Naive thymus-derived CD4-positive, alpha-beta T cell (primary cell): ENCODE measurements at regions of chr6 and their contacts with region 1.

Region 1: DNA sequence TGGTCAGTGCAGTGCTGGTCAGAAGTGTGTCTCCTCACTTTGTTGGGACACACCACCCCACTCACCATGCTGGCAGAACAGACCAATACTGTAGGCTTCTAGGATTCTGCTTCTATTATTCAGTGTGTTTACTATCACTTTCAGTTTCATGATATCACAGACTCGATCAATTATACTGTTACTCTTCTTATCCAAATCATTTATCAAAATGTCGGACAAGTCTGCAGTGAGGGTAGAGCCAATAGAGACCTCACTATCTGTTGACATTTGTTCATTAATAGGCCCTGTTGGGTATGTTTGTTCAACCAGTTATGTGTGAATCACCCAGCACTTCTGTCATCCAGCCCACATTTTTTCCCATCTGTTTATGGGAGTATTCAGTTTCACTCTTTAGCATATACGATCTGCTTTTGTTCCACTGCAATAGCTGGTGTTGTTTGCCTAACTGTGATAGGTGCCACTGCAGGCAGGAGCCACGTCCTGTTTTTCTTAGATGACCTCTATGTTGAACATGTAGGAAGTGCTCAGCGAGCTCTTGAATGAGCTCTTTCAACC is 140.1 kb downstream of the NRN1 start:
- DNase-seq: peak in 6 of 9 donors; percentile 16 to 42 (median 32)
- ATAC-seq: peak; percentile 76
- H3K4me3 ChIP-seq: peak overlapping the region; percentile 36
- H3K4me3 Mint-ChIP-seq: peak overlapping the region; percentile 69 to 86 (median 80)
- H3K27ac ChIP-seq: peak overlapping the region; percentile 70
- H3K27ac Mint-ChIP-seq: peak overlapping the region; percentile 91 to 100 (median 98)
- H3K4me1 ChIP-seq: peaks cover 31 to 44% of the 10 kb centered on the region in 2 donors
- H3K4me1 Mint-ChIP-seq: peaks cover 30 to 66% (median 59%) of the 10 kb centered on the region in 7 donors
- H3K27me3 ChIP-seq: no peaks in the 10 kb centered on the region
- H3K27me3 Mint-ChIP-seq: no peaks in the 10 kb centered on the region

Region 2: GRCh38 chr6:3990692-3991501 is 1875.7 kb before region 1 on chr6:
- CTCF ChIA-PET with region 1: no interaction called
- POLR2A ChIA-PET with region 1: no interaction called
- intact Hi-C with region 1: no loop called
- DNase-seq: peak; percentile 45 to 72 (median 58)
- ATAC-seq: peak; percentile 96
- H3K4me3 ChIP-seq: no peak overlapping the region
- H3K4me3 Mint-ChIP-seq: peak overlapping the region in 2 of 10 donors; percentile 19 to 29
- H3K27ac ChIP-seq: no peak overlapping the region
- H3K27ac Mint-ChIP-seq: peak overlapping the region in 3 of 9 donors; percentile 3 to 43 (median 19)
- H3K4me1 ChIP-seq: peaks cover 0 to 7% of the 10 kb centered on the region in 2 donors
- H3K4me1 Mint-ChIP-seq: peaks cover 13 to 37% (median 25%) of the 10 kb centered on the region in 7 donors
- H3K27me3 ChIP-seq: no peaks in the 10 kb centered on the region
- H3K27me3 Mint-ChIP-seq: no peaks in the 10 kb centered on the region

Region 3: GRCh38 chr6:5827056-5827904 is 39.3 kb before region 1 on chr6:
- CTCF ChIA-PET with region 1: no interaction called
- POLR2A ChIA-PET with region 1: interaction called, 4 read pairs
- intact Hi-C with region 1: loop called (anchors 1 to 5 kb)
- DNase-seq: no peak
- ATAC-seq: no peak
- H3K4me3 ChIP-seq: no peak overlapping the region
- H3K4me3 Mint-ChIP-seq: peak overlapping the region in 2 of 10 donors; percentile 12 to 52
- H3K27ac ChIP-seq: no peak overlapping the region
- H3K27ac Mint-ChIP-seq: peak overlapping the region in 4 of 9 donors; percentile 2 to 68 (median 38)
- H3K4me1 ChIP-seq: peaks cover 25 to 40% of the 10 kb centered on the region in 2 donors
- H3K4me1 Mint-ChIP-seq: peaks cover 28 to 76% (median 66%) of the 10 kb centered on the region in 7 donors
- H3K27me3 ChIP-seq: no peaks in the 10 kb centered on the region
- H3K27me3 Mint-ChIP-seq: no peaks in the 10 kb centered on the region

Region 4: GRCh38 chr6:5832668-5833067 is 34.0 kb before region 1 on chr6:
- CTCF ChIA-PET with region 1: no interaction called
- POLR2A ChIA-PET with region 1: interaction called, 4 read pairs
- intact Hi-C with region 1: loop called (anchors 1 to 5 kb)
- DNase-seq: no peak
- ATAC-seq: no peak
- H3K4me3 ChIP-seq: peak overlapping the region; percentile 13
- H3K4me3 Mint-ChIP-seq: peak overlapping the region; percentile 38 to 92 (median 78)
- H3K27ac ChIP-seq: peak overlapping the region; percentile 56
- H3K27ac Mint-ChIP-seq: peak overlapping the region; percentile 85 to 94 (median 92)
- H3K4me1 ChIP-seq: peaks cover 27 to 37% of the 10 kb centered on the region in 2 donors
- H3K4me1 Mint-ChIP-seq: peaks cover 37 to 67% (median 59%) of the 10 kb centered on the region in 7 donors
- H3K27me3 ChIP-seq: no peaks in the 10 kb centered on the region
- H3K27me3 Mint-ChIP-seq: peaks cover 0 to 2% (median 0%) of the 10 kb centered on the region in 5 donors

Region 5: GRCh38 chr6:5898559-5898958 is 31.9 kb after region 1 on chr6:
- CTCF ChIA-PET with region 1: no interaction called
- POLR2A ChIA-PET with region 1: no interaction called
- intact Hi-C with region 1: no loop called
- DNase-seq: no peak
- ATAC-seq: no peak
- H3K4me3 ChIP-seq: no peak overlapping the region
- H3K4me3 Mint-ChIP-seq: no peak overlapping the region
- H3K27ac ChIP-seq: no peak overlapping the region
- H3K27ac Mint-ChIP-seq: peak overlapping the region in 1 of 9 donors; percentile 8
- H3K4me1 ChIP-seq: no peaks in the 10 kb centered on the region
- H3K4me1 Mint-ChIP-seq: peaks cover 0 to 9% (median 5%) of the 10 kb centered on the region in 7 donors
- H3K27me3 ChIP-seq: no peaks in the 10 kb centered on the region
- H3K27me3 Mint-ChIP-seq: peaks cover 0 to 4% (median 0%) of the 10 kb centered on the region in 5 donors

Region 6: GRCh38 chr6:7035837-7036249 is 1169.2 kb after region 1 on chr6:
- CTCF ChIA-PET with region 1: no interaction called
- POLR2A ChIA-PET with region 1: no interaction called
- intact Hi-C with region 1: no loop called
- DNase-seq: no peak
- ATAC-seq: no peak
- H3K4me3 ChIP-seq: no peak overlapping the region
- H3K4me3 Mint-ChIP-seq: no peak overlapping the region
- H3K27ac ChIP-seq: no peak overlapping the region
- H3K27ac Mint-ChIP-seq: no peak overlapping the region
- H3K4me1 ChIP-seq: no peaks in the 10 kb centered on the region
- H3K4me1 Mint-ChIP-seq: peaks cover 0 to 3% (median 0%) of the 10 kb centered on the region in 7 donors
- H3K27me3 ChIP-seq: no peaks in the 10 kb centered on the region
- H3K27me3 Mint-ChIP-seq: peaks cover 0 to 39% (median 0%) of the 10 kb centered on the region in 5 donors